Activated CD4-positive, alpha-beta T cell treated with anti-CD3 and anti-CD28 coated beads for 36 hours (primary cell): ENCODE measurements at regions of chr11 and their contacts with region 1.

Region 1: GRCh38 chr11:43680521-43681400 is at the start of gene HSD17B12:
- DNase-seq: peak; percentile 100
- ATAC-seq: peak; percentile 97
- H3K4me3 Mint-ChIP-seq: peak within 1 kb of the TSS; percentile 90
- H3K27ac Mint-ChIP-seq: peak within 1 kb of the TSS; percentile 97
- H3K4me1 Mint-ChIP-seq: peaks cover 31% of the 10 kb centered on the region
- H3K27me3 Mint-ChIP-seq: peaks cover 2% of the 10 kb centered on the region
- total RNA-seq, gene HSD17B12: 57.6 to 68.9 TPM

Region 2: GRCh38 chr11:43358801-43359421 is 321.9 kb before region 1 on chr11 and contains the start of gene TTC17:
- CTCF ChIA-PET with region 1: no interaction called
- POLR2A ChIA-PET with region 1: interaction called, 9 read pairs
- intact Hi-C with region 1: loop called (anchors 1 kb)
- DNase-seq: peak; percentile 97
- ATAC-seq: peak; percentile 96
- H3K4me3 Mint-ChIP-seq: peak within 1 kb of the TSS; percentile 98
- H3K27ac Mint-ChIP-seq: peak within 1 kb of the TSS; percentile 99
- H3K4me1 Mint-ChIP-seq: peaks cover 45% of the 10 kb centered on the region
- H3K27me3 Mint-ChIP-seq: no peaks in the 10 kb centered on the region
- total RNA-seq, gene TTC17: 50.0 to 57.9 TPM

Region 3: DNA sequence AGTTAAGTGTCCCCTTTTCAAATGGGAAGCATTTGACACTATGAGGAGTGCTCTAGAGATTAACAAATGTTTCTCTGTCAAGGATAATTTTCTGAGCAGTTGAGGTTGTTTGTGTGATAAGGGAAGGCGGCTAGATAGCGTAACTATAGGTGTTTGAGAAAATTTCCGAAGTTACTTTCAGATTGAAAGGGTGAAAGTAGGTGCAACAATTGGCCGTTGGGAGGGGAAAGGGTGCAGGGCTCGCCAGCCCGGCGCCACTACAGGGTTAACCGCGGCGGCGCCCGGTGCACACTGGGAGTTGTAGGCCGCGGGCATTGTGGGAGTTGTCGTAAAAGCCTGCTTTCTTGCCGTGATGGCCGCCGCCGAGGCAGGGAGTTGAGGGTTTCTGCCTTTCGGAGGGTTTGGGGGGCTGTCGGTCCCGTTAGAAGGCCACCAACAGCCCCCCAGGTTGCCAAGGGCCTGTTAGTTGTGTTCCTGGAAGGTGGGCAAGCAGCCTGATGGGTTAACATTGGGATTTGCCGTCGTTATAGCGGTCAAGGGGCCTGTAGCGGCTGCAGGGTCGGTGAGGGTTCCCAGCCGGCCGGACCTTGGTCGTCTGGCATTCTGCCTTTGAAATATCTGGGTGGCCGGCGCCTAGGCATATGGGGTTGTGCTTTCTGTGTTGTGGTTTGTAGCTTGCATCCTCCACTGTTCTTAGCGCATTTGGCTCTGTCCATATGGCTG is 36.7 kb before region 1 on chr11:
- CTCF ChIA-PET with region 1: no interaction called
- POLR2A ChIA-PET with region 1: no interaction called
- intact Hi-C with region 1: loop called (anchors 1 kb)
- DNase-seq: peak; percentile 94
- ATAC-seq: peak; percentile 99
- H3K4me3 Mint-ChIP-seq: peak overlapping the region; percentile 78
- H3K27ac Mint-ChIP-seq: peak overlapping the region; percentile 89
- H3K4me1 Mint-ChIP-seq: peaks cover 19% of the 10 kb centered on the region
- H3K27me3 Mint-ChIP-seq: peaks cover 15% of the 10 kb centered on the region

Region 4: GRCh38 chr11:43868852-43869567 is 188.2 kb after region 1 on chr11:
- CTCF ChIA-PET with region 1: no interaction called
- POLR2A ChIA-PET with region 1: no interaction called
- intact Hi-C with region 1: loop called (anchors 1 to 2 kb)
- DNase-seq: peak; percentile 58
- ATAC-seq: peak; percentile 97
- H3K4me3 Mint-ChIP-seq: peak overlapping the region; percentile 7
- H3K27ac Mint-ChIP-seq: peak overlapping the region; percentile 8
- H3K4me1 Mint-ChIP-seq: peaks cover 21% of the 10 kb centered on the region
- H3K27me3 Mint-ChIP-seq: peaks cover 45% of the 10 kb centered on the region

Region 5: GRCh38 chr11:43944761-43945311 is 264.1 kb after region 1 on chr11:
- CTCF ChIA-PET with region 1: interaction called, 4 read pairs
- POLR2A ChIA-PET with region 1: no interaction called
- intact Hi-C with region 1: loop called in 1 of 2 experiments (anchors 10 kb)
- DNase-seq: peak; percentile 89
- ATAC-seq: peak; percentile 55
- H3K4me3 Mint-ChIP-seq: peak overlapping the region; percentile 21
- H3K27ac Mint-ChIP-seq: no peak overlapping the region
- H3K4me1 Mint-ChIP-seq: peaks cover 17% of the 10 kb centered on the region
- H3K27me3 Mint-ChIP-seq: peaks cover 51% of the 10 kb centered on the region

Region 6: DNA sequence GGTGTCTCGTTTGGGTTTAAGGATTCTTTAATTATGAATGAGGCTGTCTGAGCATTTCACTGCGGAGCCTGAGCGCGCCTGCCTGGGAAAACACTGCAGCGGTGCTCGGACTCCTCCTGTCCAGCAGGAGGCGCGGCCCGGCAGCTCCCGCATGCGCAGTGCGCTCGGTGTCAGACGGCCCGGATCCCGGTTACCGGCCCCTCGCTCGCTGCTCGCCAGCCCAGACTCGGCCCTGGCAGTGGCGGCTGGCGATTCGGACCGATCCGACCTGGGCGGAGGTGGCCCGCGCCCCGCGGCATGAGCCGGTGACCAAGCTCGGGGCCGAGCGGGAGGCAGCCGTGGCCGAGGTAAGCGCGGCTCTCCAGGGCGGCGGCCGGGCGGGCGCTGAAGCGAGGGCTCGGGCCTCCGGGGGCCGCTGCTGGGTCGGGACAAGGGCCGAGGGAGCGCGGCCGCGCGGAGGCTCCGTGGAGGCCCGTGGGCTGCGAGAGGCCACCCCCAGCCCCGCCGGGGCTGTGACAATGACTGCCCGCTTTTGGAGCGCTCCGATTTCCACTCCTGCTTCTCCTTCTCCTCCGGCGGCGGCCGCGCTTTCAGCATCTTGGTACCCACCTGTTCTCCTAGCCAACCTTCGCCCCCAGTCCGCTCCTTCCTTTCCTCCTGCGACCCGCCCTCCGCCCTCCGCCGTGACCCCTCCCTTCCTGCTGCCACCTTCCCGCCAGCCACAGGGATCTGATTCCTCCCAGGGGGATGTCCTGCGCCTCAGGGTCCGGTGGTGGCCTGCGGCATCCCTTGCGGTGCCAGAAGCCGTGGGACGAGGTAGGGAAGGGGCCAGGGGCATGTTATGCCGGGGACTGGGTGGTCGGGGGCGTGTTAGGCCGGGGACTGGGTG is 415.0 kb after region 1 on chr11 and contains the start of gene EXT2:
- CTCF ChIA-PET with region 1: no interaction called
- POLR2A ChIA-PET with region 1: no interaction called
- intact Hi-C with region 1: no loop called
- DNase-seq: peak; percentile 92
- ATAC-seq: peak; percentile 97
- H3K4me3 Mint-ChIP-seq: peak within 1 kb of the TSS; percentile 79
- H3K27ac Mint-ChIP-seq: no peak within 1 kb of the TSS
- H3K4me1 Mint-ChIP-seq: peaks cover 25% of the 10 kb centered on the region
- H3K27me3 Mint-ChIP-seq: no peaks in the 10 kb centered on the region
- total RNA-seq, gene EXT2: 18.4 to 20.6 TPM